ENCODE measurements at regions of chr1 and their contacts with region 1.

Region 1: GRCh38 chr1:112715264-112716053 is at the start of gene PPM1J:
- DNase-seq: peak; percentile 79 to 85
- ATAC-seq: peak; percentile 68 to 84
- H3K4me3 ChIP-seq: peak within 1 kb of the TSS; percentile 72
- H3K27ac ChIP-seq: peak within 1 kb of the TSS; percentile 55 to 84; a peak in 5 of 6 replicates
- H3K4me1 ChIP-seq: peaks cover 4% of the 10 kb centered on the region; the same call in 2 of the 3 replicates
- CTCF ChIP-seq: no peak
- EP300 ChIP-seq: no peak
- POLR2A ChIP-seq: no peak
- RAD21 ChIP-seq: no peak
- polyA plus RNA-seq, gene PPM1J: 0.62 and 0.66 TPM in 2 replicates

Region 2: DNA sequence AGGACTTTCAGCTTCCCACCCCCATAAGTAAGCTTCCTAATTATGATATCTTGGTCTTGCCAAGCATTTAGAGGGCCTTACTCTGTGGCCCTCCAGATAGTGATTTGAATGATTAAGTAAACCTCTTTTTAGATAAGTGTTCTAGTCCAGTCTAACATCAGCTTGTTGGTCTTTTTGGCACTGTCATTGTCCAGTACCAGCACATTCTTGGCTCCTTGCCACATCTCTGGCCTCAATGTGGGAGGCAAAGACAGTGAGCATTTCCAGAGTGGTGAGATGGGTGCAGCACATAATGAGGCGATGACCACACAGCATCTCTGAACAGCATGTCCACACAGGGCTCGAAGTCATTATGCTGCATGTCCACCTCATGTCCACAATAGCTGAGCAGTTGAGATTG is 89.8 kb before region 1 on chr1:
- CTCF ChIA-PET with region 1: no interaction called
- POLR2A ChIA-PET with region 1: no interaction called
- DNase-seq: peak in 1 of 2 experiments; percentile 3
- ATAC-seq: no peak
- H3K4me3 ChIP-seq: no peak overlapping the region
- H3K27ac ChIP-seq: no peak overlapping the region
- H3K4me1 ChIP-seq: peaks cover 25% of the 10 kb centered on the region
- CTCF ChIP-seq: no peak
- EP300 ChIP-seq: no peak
- POLR2A ChIP-seq: no peak
- RAD21 ChIP-seq: no peak

Region 3: GRCh38 chr1:112727716-112728115 is 12.3 kb after region 1 on chr1:
- CTCF ChIA-PET with region 1: interaction called, 34 read pairs
- POLR2A ChIA-PET with region 1: no interaction called
- DNase-seq: no peak
- ATAC-seq: peak; percentile 80 to 81; a peak in 4 of 6 replicates
- H3K4me3 ChIP-seq: no peak overlapping the region
- H3K27ac ChIP-seq: no peak overlapping the region
- H3K4me1 ChIP-seq: no peaks in the 10 kb centered on the region
- CTCF ChIP-seq: no peak
- EP300 ChIP-seq: no peak
- POLR2A ChIP-seq: no peak
- RAD21 ChIP-seq: no peak

Region 4: DNA sequence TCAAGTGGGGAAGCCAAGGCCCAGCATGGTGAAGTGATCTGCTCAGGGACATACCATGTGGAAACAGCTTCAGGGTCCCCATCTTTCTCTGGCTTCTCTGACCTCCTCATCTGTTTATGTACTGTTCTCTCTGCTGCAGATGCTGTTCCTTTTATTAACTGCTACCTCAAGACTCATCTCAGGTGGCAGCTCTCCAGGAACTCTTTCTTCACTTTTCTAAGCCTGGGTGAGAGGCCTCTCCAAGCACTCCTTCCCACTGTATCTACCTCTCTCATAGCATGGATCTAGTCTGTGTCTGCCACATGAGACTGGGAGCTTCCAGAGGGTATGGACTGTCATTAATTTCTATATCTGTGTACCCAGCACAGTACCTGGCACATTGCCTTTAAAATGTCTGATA is 73.1 kb after region 1 on chr1:
- CTCF ChIA-PET with region 1: interaction called, 15 read pairs
- POLR2A ChIA-PET with region 1: no interaction called
- DNase-seq: no peak
- ATAC-seq: no peak
- H3K4me3 ChIP-seq: no peak overlapping the region
- H3K27ac ChIP-seq: no peak overlapping the region
- H3K4me1 ChIP-seq: no peaks in the 10 kb centered on the region; the same call in 2 of the 3 replicates
- CTCF ChIP-seq: no peak
- EP300 ChIP-seq: no peak
- POLR2A ChIP-seq: no peak
- RAD21 ChIP-seq: no peak

Region 5: DNA sequence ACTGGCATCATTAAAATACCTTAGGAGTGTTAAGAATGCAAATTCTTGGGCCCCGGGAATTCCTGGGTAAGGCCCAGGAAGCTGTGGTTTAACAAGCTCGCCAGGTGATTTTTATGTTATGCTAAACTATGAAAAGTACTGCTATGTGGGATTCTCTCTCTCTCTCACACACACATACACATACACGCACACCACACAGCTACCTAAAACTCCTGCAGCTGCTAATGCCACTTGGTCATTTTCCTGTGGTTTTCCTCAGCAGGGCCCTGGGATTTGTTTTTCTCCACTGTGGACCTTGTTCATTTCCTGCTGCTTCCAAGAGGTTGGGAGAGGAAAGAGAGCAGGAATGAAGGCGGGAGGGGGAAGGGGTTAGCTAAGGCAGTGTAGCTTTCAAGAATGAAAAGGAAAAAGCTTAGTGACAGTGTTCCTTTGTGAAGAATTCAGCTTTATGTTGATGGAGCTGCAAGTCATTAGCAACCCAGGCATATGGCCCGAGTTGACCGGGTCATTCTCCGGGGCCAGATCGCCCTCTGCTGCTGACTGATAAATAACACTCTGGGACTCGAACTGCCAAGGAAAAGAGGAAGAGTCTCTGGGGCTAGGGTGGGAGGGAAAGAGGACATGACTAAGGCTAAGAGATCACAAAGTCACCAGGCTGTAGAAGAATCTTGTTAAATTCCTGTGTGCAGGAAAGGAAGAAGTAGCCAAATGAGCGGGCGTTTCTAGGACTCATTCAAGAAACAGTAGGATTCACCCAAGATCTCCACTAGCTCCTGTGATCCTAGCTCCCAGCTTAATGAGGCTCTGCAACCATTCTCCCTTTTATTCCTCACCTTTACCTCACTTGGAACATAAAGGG is 327.1 kb after region 1 on chr1:
- CTCF ChIA-PET with region 1: interaction called, 21 read pairs
- POLR2A ChIA-PET with region 1: no interaction called
- DNase-seq: peak; percentile 55 to 57
- ATAC-seq: peak; percentile 91 to 96
- H3K4me3 ChIP-seq: no peak overlapping the region
- H3K27ac ChIP-seq: 0 out of 6 replicates have a peak overlapping the region, but pooled peaks of 1 of the 2 experiments have one; percentile 4
- H3K4me1 ChIP-seq: peaks cover 4% of the 10 kb centered on the region; the same call in 1 of the 3 replicates
- CTCF ChIP-seq: peak; percentile 52
- EP300 ChIP-seq: no peak
- POLR2A ChIP-seq: no peak
- RAD21 ChIP-seq: peak; percentile 73 to 85